ENCODE measurements at regions of chr4 and their contacts with region 1.

Region 1: GRCh38 chr4:173505924-173506518 is 24.0 kb downstream of the HAND2 start:
- DNase-seq: no peak
- ATAC-seq: peak; percentile 53
- H3K4me3 Mint-ChIP-seq: peak overlapping the region; percentile 70
- H3K27ac Mint-ChIP-seq: no peak overlapping the region
- H3K4me1 Mint-ChIP-seq: peaks cover 48% of the 10 kb centered on the region
- H3K27me3 Mint-ChIP-seq: peaks cover 76% of the 10 kb centered on the region
- CTCF ChIP-seq: no peak

Region 2: GRCh38 chr4:173334085-173334772 is 171.8 kb before region 1 on chr4 and contains the start of gene HMGB2:
- CTCF ChIA-PET with region 1: no interaction called
- POLR2A ChIA-PET with region 1: interaction called, 3 read pairs
- intact Hi-C with region 1: loop called (anchors 5 kb)
- DNase-seq: peak; percentile 95
- ATAC-seq: peak; percentile 93
- H3K4me3 Mint-ChIP-seq: peak within 1 kb of the TSS; percentile 96
- H3K27ac Mint-ChIP-seq: peak within 1 kb of the TSS; percentile 98
- H3K4me1 Mint-ChIP-seq: peaks cover 25% of the 10 kb centered on the region
- H3K27me3 Mint-ChIP-seq: no peaks in the 10 kb centered on the region
- CTCF ChIP-seq: no peak
- total RNA-seq, gene HMGB2: 63.2 and 63.9 TPM in 2 replicates

Region 3: GRCh38 chr4:173522123-173522950 is 16.3 kb after region 1 on chr4:
- CTCF ChIA-PET with region 1: no interaction called
- POLR2A ChIA-PET with region 1: interaction called, 3 read pairs
- intact Hi-C with region 1: loop called (anchors 1 kb)
- DNase-seq: no peak
- ATAC-seq: no peak
- H3K4me3 Mint-ChIP-seq: peak overlapping the region; percentile 28
- H3K27ac Mint-ChIP-seq: no peak overlapping the region
- H3K4me1 Mint-ChIP-seq: peaks cover 5% of the 10 kb centered on the region
- H3K27me3 Mint-ChIP-seq: peaks cover 87% of the 10 kb centered on the region
- CTCF ChIP-seq: no peak

Region 4: DNA sequence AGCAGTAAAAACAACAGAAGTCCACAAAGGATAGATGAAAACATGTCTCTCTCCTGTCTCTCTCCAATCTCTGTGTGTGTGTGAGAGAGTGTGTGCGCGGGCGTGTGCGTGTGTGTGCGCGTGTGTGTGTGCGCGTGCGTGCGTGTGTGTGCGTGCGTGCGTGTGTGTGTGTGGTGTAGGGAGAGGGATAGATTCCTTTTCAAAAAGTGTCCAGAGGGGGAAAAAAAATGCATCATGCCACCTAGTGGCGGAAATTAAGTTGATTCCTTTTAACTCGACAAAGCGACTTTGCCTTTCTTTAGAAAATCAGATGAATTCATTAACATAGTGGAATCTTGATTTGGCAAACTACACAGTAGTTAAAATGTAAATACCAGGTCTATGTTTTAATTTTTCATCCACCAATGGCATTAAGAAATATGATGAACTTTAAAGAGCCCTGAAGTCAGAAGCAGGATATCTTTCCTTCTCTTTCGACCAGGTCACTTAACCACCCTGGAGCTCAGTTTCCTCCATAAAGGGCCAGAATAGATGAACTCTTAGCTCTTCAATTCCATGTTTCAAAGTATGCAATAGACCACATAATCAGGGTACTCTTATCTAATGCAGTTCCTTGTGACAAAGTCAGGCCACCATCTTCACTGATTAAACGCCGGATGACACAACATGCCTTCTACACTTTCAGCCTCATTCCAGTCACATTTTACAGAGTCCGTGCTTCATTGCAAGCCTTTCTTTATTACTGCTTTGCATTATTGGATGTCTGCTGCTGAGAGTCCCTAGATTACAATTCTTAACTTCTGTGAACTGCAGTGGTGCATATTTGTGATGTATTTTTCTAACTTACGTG is 614.6 kb after region 1 on chr4:
- CTCF ChIA-PET with region 1: interaction called, 6 read pairs
- POLR2A ChIA-PET with region 1: no interaction called
- intact Hi-C with region 1: loop called (anchors 1 kb)
- DNase-seq: no peak
- ATAC-seq: no peak
- H3K4me3 Mint-ChIP-seq: no peak overlapping the region
- H3K27ac Mint-ChIP-seq: no peak overlapping the region
- H3K4me1 Mint-ChIP-seq: peaks cover 4% of the 10 kb centered on the region
- H3K27me3 Mint-ChIP-seq: peaks cover 21% of the 10 kb centered on the region
- CTCF ChIP-seq: no peak

Region 5: GRCh38 chr4:174222266-174222872 is 716.3 kb after region 1 on chr4:
- CTCF ChIA-PET with region 1: no interaction called
- POLR2A ChIA-PET with region 1: no interaction called
- intact Hi-C with region 1: loop called (anchors 5 kb)
- DNase-seq: no peak
- ATAC-seq: no peak
- H3K4me3 Mint-ChIP-seq: no peak overlapping the region
- H3K27ac Mint-ChIP-seq: no peak overlapping the region
- H3K4me1 Mint-ChIP-seq: peaks cover 9% of the 10 kb centered on the region
- H3K27me3 Mint-ChIP-seq: peaks cover 39% of the 10 kb centered on the region
- CTCF ChIP-seq: no peak

Region 6: GRCh38 chr4:174318829-174319764 is 813.1 kb after region 1 on chr4:
- CTCF ChIA-PET with region 1: no interaction called
- POLR2A ChIA-PET with region 1: no interaction called
- intact Hi-C with region 1: loop called (anchors 5 kb)
- DNase-seq: no peak
- ATAC-seq: no peak
- H3K4me3 Mint-ChIP-seq: no peak overlapping the region
- H3K27ac Mint-ChIP-seq: no peak overlapping the region
- H3K4me1 Mint-ChIP-seq: no peaks in the 10 kb centered on the region
- H3K27me3 Mint-ChIP-seq: no peaks in the 10 kb centered on the region
- CTCF ChIP-seq: no peak